ENCODE measurements at regions of chr3 and their contacts with region 1.

Region 1: DNA sequence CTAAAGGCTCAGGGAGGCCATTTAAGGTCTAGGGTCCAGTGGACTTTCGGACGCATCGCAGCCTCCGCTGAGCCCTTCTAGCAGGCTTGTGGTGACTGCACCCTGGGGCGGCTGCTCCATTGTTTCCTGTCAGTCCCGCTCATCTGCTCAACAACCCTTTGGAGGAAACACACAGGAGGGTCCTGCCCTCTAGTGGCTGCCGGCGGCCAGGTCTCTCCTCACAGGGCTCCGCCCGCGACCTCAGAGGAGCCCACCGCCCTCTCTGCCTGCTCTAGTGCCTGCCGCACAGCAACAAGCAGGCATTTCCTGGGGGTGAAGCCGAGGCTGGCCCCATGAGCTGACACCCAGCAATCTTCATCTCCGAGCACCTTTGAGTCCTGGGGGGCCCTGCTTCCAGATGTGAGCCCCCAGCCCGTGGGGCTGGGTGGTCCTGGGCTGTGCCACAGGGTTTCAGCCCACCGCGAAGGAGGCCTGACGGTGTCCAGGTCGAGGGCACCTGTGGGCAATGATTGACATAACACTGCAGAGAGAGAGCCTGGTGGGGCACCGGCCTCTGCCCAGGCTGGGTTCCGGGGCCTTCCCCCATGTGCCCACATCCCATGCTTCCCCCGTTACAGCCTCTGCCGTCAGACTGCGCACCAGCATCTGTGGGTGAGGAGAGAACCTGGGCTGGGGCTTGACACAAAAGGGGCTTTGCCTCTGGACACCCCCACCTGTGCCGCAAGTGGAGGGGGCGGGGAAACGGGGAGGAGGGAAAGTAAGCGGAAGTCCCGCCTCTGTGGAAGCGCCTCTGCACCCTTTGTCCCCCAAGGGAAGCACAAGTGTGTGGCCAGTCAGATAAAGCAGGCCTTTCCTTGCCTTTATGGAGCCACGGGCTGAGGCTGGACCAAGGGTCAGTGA is 27.0 kb upstream of the SFMBT1 start:
- DNase-seq: peak; percentile 95
- H3K4me3 Mint-ChIP-seq: peak overlapping the region; percentile 81
- H3K27ac Mint-ChIP-seq: peak overlapping the region; percentile 84
- H3K4me1 Mint-ChIP-seq: peaks cover 17% of the 10 kb centered on the region
- H3K27me3 Mint-ChIP-seq: no peaks in the 10 kb centered on the region

Region 2: DNA sequence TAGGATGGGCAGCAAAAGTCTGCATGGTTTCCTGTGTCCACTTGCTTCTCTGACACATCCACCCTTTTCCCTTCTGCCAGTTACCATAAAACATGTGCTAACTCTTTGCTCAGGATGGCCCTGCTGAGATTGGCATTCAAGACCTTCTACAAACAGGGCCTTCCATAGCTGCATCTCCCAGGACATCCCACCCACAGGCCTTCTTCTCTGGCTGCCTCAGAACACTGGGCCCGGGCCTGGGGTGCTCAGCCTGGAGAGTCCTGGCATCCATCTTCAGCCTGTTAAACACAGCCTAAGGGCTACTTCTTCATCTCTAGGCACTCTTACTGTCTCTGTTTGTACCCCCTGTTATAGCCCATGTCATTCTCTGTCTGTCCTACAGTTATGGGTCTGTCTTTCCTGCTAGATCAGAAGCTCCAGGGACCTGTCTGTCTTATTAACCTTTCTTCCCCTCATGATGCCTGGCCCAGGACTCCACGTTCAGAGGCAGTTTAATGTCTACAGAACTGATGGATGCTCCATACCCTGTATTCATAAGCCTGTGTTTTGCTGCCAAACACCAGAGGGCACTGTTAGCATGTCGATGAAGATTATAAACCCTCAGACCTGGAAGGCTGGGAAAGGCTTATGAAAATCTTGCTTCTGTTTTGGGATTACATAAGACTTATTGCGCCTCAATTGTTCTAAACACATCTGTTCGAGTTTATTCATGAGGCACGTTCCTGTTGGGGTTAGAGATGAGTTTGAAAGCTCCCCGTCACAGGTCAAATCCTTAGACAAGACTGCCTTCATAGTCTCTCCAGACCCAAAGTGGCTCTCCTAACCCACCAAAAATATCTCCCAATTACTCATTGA is 644.5 kb before region 1 on chr3:
- CTCF ChIA-PET with region 1: no interaction called
- intact Hi-C with region 1: loop called (anchors 1 kb)
- DNase-seq: peak; percentile 64
- H3K4me3 Mint-ChIP-seq: no peak overlapping the region
- H3K27ac Mint-ChIP-seq: no peak overlapping the region
- H3K4me1 Mint-ChIP-seq: no peaks in the 10 kb centered on the region
- H3K27me3 Mint-ChIP-seq: no peaks in the 10 kb centered on the region

Region 3: DNA sequence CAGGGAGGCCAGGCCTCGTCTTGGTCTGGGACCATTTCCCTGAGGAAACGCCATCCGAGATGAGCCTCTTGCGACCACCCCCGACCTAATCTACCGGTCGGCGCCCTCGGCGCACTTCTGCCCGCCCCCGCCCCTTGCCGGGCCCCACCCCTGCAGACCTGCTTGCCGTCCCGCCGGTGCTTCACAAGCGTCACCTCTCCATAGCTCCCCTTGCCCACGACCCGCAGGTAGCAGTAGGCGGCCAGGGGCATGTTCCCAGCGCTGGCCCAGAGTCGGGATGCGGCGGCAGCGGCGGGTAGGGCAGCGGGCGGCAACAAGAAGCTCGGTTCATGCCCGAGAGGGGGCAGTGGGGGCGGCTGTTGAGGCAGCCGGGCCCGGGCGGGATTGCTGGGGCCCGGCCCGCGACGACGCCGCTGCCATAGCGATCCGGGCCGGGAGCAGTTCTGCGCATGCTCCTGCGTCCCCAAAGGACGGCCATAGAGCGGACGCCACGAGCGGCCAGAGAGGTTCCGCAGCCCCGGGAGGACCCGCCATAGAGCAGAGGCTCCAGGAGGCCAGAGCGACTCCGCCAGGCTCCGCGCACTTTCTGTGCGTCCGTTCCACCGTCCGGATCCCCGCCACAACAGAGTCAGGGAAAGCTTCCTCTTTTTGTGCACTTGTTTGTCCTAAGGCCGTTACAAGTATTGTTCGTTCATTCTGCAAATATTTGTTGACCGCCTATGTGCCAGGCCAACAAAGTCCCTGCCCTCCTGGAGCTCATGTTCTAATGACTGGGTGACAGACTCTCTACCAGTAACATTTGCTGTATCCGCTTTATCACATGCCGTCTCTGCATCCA is 302.2 kb before region 1 on chr3 and contains the start of gene NEK4:
- CTCF ChIA-PET with region 1: no interaction called
- intact Hi-C with region 1: loop called (anchors 1 kb)
- DNase-seq: peak; percentile 91
- H3K4me3 Mint-ChIP-seq: peak within 1 kb of the TSS; percentile 96
- H3K27ac Mint-ChIP-seq: peak within 1 kb of the TSS; percentile 93
- H3K4me1 Mint-ChIP-seq: peaks cover 20% of the 10 kb centered on the region
- H3K27me3 Mint-ChIP-seq: no peaks in the 10 kb centered on the region
- total RNA-seq, gene NEK4: 12.8 to 15.3 TPM

Region 4: DNA sequence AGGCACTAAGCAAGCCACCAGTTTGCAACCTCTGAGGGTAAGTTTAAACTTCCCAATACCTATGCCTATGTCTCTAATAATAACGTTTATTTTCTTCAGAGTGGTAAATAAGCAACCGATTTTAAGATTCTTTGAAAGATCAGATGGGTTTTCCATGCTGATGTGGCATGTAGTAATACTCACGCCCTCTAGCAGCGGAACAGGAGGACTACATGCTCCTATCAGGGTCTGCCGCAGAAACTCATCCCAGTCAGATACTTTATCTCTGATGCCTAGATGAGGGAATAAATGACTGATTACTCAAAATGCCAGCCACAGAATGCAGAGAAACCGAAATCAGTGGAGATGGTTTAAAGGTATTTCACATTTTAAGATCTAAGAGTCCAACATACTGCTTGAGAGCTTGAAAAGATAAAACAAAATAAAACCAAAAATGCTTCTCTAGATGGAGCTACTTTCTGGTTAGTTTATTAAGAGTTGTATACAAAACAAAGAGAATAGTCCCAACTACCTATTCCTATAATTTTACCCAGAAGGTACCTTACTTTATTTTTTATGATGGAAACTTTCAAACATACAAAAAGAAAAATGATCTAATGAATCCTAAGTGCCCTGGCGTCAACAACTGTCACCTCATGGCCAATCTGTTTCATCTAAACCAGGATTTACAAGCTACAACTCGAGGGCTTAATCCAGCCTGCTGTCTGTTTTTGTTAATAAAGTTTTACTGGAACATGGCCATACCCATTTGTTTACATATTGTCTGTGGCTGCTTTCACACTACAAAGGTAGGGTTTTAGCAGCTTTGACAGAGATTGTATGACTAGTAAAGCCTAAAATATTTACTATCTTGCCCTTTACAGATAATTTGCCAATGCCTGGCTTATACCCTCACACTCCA is 138.0 kb before region 1 on chr3:
- CTCF ChIA-PET with region 1: interaction called, 5 read pairs
- intact Hi-C with region 1: loop called (anchors 1 kb)
- DNase-seq: peak; percentile 76
- H3K4me3 Mint-ChIP-seq: no peak overlapping the region
- H3K27ac Mint-ChIP-seq: no peak overlapping the region
- H3K4me1 Mint-ChIP-seq: peaks cover 10% of the 10 kb centered on the region
- H3K27me3 Mint-ChIP-seq: no peaks in the 10 kb centered on the region

Region 5: DNA sequence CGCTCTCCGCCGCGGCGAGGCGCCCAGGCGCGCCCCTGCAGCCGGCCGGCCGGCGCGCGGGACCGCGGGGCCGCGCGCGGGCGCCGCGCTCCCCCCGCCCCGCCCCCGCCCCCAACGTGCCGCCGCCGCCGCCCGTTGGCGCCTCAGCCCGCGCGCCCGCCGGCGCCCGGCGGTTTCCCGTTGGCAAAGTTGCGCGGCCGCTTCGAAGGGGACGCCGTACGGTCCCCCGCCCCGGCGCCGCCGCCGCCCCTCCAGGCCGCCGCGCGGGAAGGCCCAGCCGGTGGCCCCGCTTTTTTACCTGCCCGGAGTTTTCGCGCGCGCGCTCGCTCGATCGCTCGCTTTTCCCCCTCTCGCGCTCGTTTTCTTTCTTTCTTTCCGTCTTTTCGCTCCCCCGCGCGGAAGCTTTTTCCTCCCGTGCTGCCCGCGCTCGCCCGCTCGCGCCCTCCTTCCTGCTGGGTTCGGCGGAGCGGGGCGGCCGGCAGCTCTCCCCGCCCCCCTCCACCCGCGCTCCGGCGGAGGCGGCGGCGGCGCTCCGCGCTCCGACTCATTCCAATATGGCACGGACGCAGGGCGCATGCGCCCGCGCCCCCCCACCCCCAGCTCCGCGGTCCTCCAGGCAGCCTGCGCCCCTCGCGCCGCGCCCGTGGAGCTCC is 27.3 kb before region 1 on chr3 and contains the start of gene SFMBT1:
- CTCF ChIA-PET with region 1: interaction called, 4 read pairs
- intact Hi-C with region 1: loop called (anchors 1 kb)
- DNase-seq: peak; percentile 68
- H3K4me3 Mint-ChIP-seq: peak within 1 kb of the TSS; percentile 90
- H3K27ac Mint-ChIP-seq: peak within 1 kb of the TSS; percentile 90
- H3K4me1 Mint-ChIP-seq: peaks cover 42% of the 10 kb centered on the region
- H3K27me3 Mint-ChIP-seq: no peaks in the 10 kb centered on the region
- total RNA-seq, gene SFMBT1: 15.1 to 15.4 TPM

Measured in activated naive CD4-positive, alpha-beta T cell treated with anti-CD3 and anti-CD28 coated beads for 36 hours (primary cell).